Mammary epithelial cell (primary cell): ENCODE measurements at regions of chr4 and their contacts with region 1.

Region 1: GRCh38 chr4:78784236-78784865 is 8.2 kb downstream of the BMP2K start:
- DNase-seq: peak; percentile 66
- H3K4me3 ChIP-seq: no peak overlapping the region
- H3K27ac ChIP-seq: no peak overlapping the region
- H3K4me1 ChIP-seq: peaks cover 8% of the 10 kb centered on the region
- H3K27me3 ChIP-seq: no peaks in the 10 kb centered on the region
- CTCF ChIP-seq: no peak

Region 2: DNA sequence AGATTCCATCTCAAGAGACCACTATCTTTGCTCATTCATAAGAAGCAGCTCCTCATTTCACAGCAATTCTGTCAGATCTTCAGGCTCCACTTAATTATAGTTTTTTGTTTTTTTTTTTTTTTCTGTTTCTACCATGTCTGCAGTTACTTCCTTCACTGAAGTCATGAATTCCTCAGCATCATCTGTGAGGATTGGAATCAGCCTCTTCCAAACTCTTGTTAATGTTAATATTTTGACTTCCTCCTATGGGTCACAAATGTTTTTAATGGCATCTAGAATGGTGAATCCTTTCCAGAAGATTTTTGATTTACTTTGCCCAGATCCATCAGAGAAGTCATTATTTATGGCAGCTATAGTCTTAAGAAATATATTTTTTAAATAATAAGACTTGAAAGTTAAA is 44.9 kb after region 1 on chr4:
- CTCF ChIA-PET with region 1: no interaction called
- dilution Hi-C with region 1: no loop called
- in situ Hi-C with region 1: no loop called
- intact Hi-C with region 1: loop called (anchors 5 kb)
- DNase-seq: no peak
- H3K4me3 ChIP-seq: no peak overlapping the region
- H3K27ac ChIP-seq: no peak overlapping the region
- H3K4me1 ChIP-seq: no peaks in the 10 kb centered on the region
- H3K27me3 ChIP-seq: no peaks in the 10 kb centered on the region
- CTCF ChIP-seq: no peak

Region 3: GRCh38 chr4:79294064-79294463 is 509.7 kb after region 1 on chr4:
- CTCF ChIA-PET with region 1: no interaction called
- dilution Hi-C with region 1: no loop called
- in situ Hi-C with region 1: no loop called
- intact Hi-C with region 1: no loop called
- DNase-seq: no peak
- H3K4me3 ChIP-seq: no peak overlapping the region
- H3K27ac ChIP-seq: no peak overlapping the region
- H3K4me1 ChIP-seq: no peaks in the 10 kb centered on the region
- H3K27me3 ChIP-seq: no peaks in the 10 kb centered on the region
- CTCF ChIP-seq: no peak